CD4-positive, alpha-beta memory T cell (primary cell): ENCODE measurements at regions of chr19 and their contacts with region 1.

Region 1: DNA sequence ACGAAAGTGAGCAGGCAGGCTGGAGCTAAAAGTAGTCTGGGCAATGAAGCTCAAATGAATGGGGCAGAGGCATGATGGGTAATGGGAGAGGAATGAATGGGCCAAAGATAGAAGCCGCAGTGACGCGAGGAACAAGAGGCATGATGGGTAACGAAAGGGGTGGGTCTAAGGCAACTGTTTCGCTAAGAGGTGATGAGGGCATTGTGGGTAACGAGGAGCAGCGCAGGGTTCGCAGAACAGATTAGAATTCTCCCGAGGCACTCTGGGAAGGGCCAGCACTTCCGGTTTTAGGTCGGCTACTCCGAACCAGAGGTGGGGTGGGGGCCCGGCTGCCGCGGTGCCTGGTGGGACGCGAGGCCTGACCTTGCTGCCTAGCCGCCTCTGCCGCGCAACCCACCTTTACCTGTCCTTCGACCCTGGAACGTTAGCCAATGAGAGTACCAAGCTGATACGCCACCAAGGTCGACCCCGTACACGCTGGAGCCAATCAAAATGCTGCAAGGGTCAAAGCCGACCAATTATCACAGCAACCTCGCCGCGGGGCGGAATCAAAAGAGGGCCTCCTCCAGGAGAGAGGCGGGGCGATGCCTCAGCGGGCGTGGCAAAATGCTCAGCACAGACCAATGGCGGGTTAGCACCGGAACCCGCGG is 563 bp upstream of the TOMM40 start:
- DNase-seq: peak; percentile 100
- H3K4me3 ChIP-seq: peak overlapping the region; percentile 36 to 59
- H3K4me3 Mint-ChIP-seq: peak overlapping the region; percentile 80 to 95 (median 89)
- H3K27ac ChIP-seq: peak overlapping the region; percentile 83
- H3K27ac Mint-ChIP-seq: peak overlapping the region; percentile 83 to 97 (median 95)
- H3K4me1 ChIP-seq: peaks cover 22% of the 10 kb centered on the region
- H3K4me1 Mint-ChIP-seq: peaks cover 19 to 35% (median 28%) of the 10 kb centered on the region in 4 donors
- H3K27me3 ChIP-seq: no peaks in the 10 kb centered on the region
- H3K27me3 Mint-ChIP-seq: no peaks in the 10 kb centered on the region

Region 2: DNA sequence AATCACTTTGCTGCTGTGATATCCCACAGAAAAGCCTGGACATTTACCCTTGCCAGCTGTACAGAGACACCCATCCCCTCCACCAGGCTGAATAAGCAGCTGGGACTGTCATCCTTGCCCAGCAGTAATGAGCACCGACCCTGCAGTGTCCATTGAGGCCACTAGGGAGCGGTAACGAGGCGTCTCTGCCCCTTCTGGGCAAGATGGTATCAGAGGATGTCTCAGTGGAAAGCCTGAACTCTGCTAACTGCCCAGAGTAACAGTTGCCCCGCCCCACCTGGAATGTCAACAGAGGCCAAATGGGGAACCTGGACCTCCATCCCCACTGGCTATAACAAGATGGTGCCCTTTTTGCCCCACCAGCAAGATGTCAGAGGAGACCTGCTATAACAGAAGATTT is 338.2 kb before region 1 on chr19:
- CTCF ChIA-PET with region 1: no interaction called
- POLR2A ChIA-PET with region 1: no interaction called
- intact Hi-C with region 1: no loop called
- DNase-seq: no peak
- H3K4me3 ChIP-seq: no peak overlapping the region
- H3K4me3 Mint-ChIP-seq: no peak overlapping the region
- H3K27ac ChIP-seq: no peak overlapping the region
- H3K27ac Mint-ChIP-seq: no peak overlapping the region
- H3K4me1 ChIP-seq: no peaks in the 10 kb centered on the region
- H3K4me1 Mint-ChIP-seq: no peaks in the 10 kb centered on the region
- H3K27me3 ChIP-seq: no peaks in the 10 kb centered on the region
- H3K27me3 Mint-ChIP-seq: peaks cover 2 to 13% of the 10 kb centered on the region in 2 donors

Region 3: GRCh38 chr19:44746946-44747738 is 143.3 kb before region 1 on chr19:
- CTCF ChIA-PET with region 1: no interaction called
- POLR2A ChIA-PET with region 1: no interaction called
- intact Hi-C with region 1: loop called (anchors 5 kb)
- DNase-seq: peak; percentile 81 to 95 (median 86)
- H3K4me3 ChIP-seq: peak overlapping the region; percentile 66
- H3K4me3 Mint-ChIP-seq: peak overlapping the region; percentile 89 to 99 (median 96)
- H3K27ac ChIP-seq: peak overlapping the region; percentile 98
- H3K27ac Mint-ChIP-seq: peak overlapping the region; percentile 85 to 100 (median 97)
- H3K4me1 ChIP-seq: peaks cover 44% of the 10 kb centered on the region
- H3K4me1 Mint-ChIP-seq: peaks cover 30 to 67% (median 45%) of the 10 kb centered on the region in 4 donors
- H3K27me3 ChIP-seq: no peaks in the 10 kb centered on the region
- H3K27me3 Mint-ChIP-seq: no peaks in the 10 kb centered on the region

Region 4: DNA sequence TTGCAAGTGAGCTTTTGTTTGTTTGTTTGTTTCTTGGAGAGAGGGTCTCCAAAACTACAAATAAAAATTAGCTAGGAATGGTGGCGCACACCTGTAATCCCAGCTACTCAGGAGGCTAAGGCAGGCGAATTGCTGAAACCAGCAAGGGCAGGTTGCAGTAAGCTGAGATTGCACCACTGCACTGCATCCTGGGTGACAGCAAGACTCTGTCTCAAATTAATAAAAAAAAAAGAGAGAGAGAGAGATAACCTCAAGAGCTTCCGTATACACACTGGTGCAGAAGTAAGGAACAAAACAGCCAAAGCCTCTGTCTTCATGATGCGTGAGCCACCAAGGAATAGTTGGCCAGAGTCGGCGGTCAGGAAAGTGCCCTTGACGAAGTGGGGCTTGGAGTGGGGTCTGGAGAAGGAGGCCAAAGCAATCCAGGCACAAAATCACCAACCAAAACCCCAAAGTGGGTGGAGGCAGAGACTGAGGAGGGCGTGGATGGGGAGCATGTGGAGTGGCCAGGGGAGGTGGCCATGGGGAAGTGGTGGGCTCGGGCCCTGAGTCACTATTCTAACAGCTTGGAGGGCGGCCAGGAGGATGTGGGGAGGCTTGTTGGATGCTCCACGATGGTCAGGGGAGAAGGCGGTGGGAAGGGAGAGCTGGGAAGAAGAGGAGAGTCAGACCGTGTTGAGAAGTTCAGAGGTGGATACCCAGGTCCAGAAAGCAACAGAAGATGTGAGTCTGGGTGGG is 20.6 kb before region 1 on chr19:
- CTCF ChIA-PET with region 1: no interaction called
- POLR2A ChIA-PET with region 1: no interaction called
- intact Hi-C with region 1: no loop called
- DNase-seq: no peak
- H3K4me3 ChIP-seq: no peak overlapping the region
- H3K4me3 Mint-ChIP-seq: no peak overlapping the region
- H3K27ac ChIP-seq: no peak overlapping the region
- H3K27ac Mint-ChIP-seq: peak overlapping the region in 1 of 7 donors; percentile 72
- H3K4me1 ChIP-seq: no peaks in the 10 kb centered on the region
- H3K4me1 Mint-ChIP-seq: no peaks in the 10 kb centered on the region
- H3K27me3 ChIP-seq: no peaks in the 10 kb centered on the region
- H3K27me3 Mint-ChIP-seq: peaks cover 0 to 2% of the 10 kb centered on the region in 2 donors